ENCODE measurements at regions of chr11 and their contacts with region 1.

Region 1: GRCh38 chr11:1113405-1114201 is 38.9 kb downstream of the MUC2 start:
- DNase-seq: no peak
- H3K4me3 ChIP-seq: no peak overlapping the region
- H3K27ac ChIP-seq: no peak overlapping the region
- H3K4me1 ChIP-seq: no peaks in the 10 kb centered on the region
- H3K27me3 ChIP-seq: 0 out of 2 replicates have a peak, but pooled peaks cover 4% of the 10 kb centered on the region
- CTCF ChIP-seq: no peak

Region 2: GRCh38 chr11:1050581-1051355 is 62.8 kb before region 1 on chr11:
- CTCF ChIA-PET with region 1: no interaction called
- POLR2A ChIA-PET with region 1: no interaction called
- intact Hi-C with region 1: loop called (anchors 10 kb)
- DNase-seq: peak; percentile 45 to 77
- H3K4me3 ChIP-seq: no peak overlapping the region
- H3K27ac ChIP-seq: no peak overlapping the region
- H3K4me1 ChIP-seq: no peaks in the 10 kb centered on the region
- H3K27me3 ChIP-seq: no peaks in the 10 kb centered on the region
- CTCF ChIP-seq: peak; percentile 83

Region 3: DNA sequence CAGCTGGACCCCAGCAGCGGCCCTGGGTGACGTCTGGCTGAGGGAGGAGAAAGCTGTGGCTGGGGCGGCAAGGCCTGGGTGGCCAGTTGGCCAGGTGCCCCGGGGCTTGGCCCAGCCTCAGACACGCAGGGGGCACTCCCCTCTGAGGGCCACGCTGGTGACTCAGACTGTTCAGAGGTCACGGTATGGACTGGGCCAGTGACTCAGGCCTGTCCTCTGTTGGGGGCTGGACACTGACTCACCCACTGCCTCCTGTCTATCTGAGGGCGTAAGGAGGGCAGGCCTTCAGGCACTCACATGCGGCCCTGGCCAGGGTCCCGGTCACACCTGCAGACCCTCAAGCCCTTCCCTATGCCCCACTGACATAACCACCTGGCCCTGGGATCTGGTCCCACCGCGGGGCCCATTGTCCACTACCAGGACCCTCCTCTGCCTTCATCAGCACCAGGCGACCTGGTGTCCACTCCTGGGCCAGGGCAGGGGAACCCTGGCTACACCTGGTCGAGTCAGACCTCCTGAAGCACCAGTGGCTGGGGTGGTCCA is 40.4 kb after region 1 on chr11:
- CTCF ChIA-PET with region 1: no interaction called
- POLR2A ChIA-PET with region 1: no interaction called
- intact Hi-C with region 1: loop called (anchors 5 kb)
- DNase-seq: peak; percentile 90 to 94
- H3K4me3 ChIP-seq: peak overlapping the region; percentile 48; the same call in 1 of the 2 replicates
- H3K27ac ChIP-seq: peak overlapping the region; percentile 96
- H3K4me1 ChIP-seq: peaks cover 53% of the 10 kb centered on the region
- H3K27me3 ChIP-seq: no peaks in the 10 kb centered on the region
- CTCF ChIP-seq: no peak

Region 4: DNA sequence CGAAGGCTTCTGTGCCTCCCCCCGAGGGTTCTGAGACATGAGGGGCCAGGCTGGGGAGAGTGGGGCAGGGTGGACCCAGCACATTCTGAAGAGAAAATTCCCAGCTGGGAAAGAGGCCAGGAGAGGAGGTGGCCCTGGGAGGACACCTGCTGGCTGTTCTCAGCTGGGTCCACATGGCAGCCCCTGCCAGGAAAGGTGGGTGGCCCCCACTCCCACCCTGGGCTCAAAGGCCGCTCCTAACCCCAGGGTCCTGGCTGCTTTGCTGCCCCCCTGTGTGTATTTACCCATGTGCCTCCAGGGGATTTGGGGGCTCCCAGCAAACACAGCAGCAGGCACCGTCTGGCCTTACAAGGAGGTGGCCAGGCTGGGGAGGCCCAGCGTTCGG is 119.7 kb after region 1 on chr11:
- CTCF ChIA-PET with region 1: interaction called, 5 read pairs
- POLR2A ChIA-PET with region 1: no interaction called
- intact Hi-C with region 1: loop called (anchors 2 kb)
- DNase-seq: no peak
- H3K4me3 ChIP-seq: no peak overlapping the region
- H3K27ac ChIP-seq: no peak overlapping the region
- H3K4me1 ChIP-seq: peaks cover 11% of the 10 kb centered on the region
- H3K27me3 ChIP-seq: no peaks in the 10 kb centered on the region
- CTCF ChIP-seq: peak; percentile 52; the same call in 1 of the 2 replicates

Region 5: DNA sequence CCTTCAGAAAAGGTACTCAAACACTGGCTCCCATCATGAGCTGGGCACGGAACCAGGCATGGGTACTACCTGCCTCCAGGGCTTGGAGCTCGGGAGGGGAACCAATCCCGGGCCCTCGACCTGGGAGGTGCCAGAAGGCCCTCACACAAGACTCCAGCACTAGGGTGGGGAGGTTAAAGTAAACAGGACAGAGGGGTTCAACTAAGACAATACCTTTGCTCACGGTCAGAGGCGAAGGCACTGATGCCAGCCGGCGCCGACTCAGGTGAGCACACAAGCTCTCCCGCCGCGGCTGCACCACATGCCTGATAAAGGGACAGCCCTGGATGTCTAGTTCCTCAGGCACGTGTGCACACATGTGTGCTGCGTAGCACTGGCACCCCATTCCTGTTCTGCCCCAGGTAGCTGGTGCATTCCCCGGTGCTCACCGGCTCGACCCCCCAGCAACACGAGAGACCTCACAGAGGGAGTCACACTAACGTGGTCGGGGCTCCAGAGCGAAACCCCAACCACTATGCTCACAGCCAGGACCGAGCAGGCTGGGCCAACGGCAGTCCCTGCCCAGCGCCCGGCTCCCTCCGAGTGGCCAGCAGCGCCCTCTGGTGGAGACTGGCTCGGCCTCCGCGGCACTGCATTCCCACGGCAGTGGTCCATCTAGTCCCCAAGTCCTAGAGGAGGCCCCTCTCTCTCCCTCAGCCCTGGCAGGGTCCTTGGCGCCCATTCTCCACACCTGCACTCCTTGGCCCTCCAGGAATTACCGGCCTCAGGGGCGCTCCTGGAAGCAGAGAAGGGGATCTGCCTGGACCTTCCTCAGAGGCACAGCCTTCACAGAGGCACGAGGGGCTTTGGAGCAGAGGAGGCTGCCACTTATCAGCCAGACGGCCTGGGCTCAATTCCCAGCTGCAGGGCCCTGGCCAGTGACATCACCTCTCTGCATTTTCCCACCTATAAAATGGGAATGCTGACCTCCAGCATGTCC is 401.8 kb after region 1 on chr11:
- CTCF ChIA-PET with region 1: no interaction called
- POLR2A ChIA-PET with region 1: no interaction called
- intact Hi-C with region 1: loop called (anchors 5 kb)
- DNase-seq: peak in 1 of 2 experiments; percentile 66
- H3K4me3 ChIP-seq: no peak overlapping the region
- H3K27ac ChIP-seq: no peak overlapping the region
- H3K4me1 ChIP-seq: no peaks in the 10 kb centered on the region
- H3K27me3 ChIP-seq: no peaks in the 10 kb centered on the region
- CTCF ChIP-seq: peak; percentile 76

Measured in PC-9 (cell line).